ENCODE measurements at regions of chrX and their contacts with region 1.

Region 1: DNA sequence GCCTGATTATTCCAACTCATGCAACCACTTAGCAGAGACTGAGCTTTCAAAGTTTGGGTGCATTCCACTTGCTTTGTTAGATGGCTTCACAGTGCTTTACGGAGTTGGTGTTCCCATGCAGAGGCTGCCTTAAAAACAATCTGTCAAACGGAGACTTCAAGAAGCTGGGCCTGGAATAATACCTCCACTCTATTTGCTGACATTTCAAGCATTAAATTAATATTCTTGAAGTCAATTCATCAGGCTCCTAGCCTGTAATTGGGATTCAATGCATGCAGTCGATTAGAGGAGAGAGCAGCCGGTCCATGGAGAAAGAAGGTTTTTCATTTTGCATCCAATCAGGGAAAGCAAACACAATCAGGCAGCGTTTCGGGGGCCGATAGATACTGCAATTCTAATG is 314.7 kb upstream of the PRKX start:
- DNase-seq: no peak
- ATAC-seq: no peak

Region 2: DNA sequence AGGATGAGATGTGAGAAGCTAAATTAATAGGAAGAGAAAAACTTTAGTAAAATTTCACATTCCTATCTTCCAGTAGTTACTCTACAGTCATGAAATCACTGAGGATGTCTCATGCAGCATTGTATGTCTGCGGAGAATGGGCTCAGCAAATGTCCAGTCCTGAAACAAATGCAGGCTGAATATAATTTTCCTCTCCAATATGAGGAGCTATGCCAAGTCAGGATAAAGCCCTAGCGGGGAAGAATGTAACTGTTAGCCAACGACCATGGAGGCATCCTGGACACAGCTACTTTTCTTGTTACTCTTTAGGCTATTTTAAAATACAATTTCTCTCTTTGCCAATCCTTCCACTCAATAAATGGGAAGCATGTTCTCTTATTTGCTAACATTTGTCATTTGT is 442.4 kb before region 1 on chrX:
- intact Hi-C with region 1: loop called (anchors 5 kb)
- DNase-seq: no peak
- ATAC-seq: peak; percentile 26